Calu3 (cell line): ENCODE measurements at regions of chr2 and their contacts with region 1.

Region 1: DNA sequence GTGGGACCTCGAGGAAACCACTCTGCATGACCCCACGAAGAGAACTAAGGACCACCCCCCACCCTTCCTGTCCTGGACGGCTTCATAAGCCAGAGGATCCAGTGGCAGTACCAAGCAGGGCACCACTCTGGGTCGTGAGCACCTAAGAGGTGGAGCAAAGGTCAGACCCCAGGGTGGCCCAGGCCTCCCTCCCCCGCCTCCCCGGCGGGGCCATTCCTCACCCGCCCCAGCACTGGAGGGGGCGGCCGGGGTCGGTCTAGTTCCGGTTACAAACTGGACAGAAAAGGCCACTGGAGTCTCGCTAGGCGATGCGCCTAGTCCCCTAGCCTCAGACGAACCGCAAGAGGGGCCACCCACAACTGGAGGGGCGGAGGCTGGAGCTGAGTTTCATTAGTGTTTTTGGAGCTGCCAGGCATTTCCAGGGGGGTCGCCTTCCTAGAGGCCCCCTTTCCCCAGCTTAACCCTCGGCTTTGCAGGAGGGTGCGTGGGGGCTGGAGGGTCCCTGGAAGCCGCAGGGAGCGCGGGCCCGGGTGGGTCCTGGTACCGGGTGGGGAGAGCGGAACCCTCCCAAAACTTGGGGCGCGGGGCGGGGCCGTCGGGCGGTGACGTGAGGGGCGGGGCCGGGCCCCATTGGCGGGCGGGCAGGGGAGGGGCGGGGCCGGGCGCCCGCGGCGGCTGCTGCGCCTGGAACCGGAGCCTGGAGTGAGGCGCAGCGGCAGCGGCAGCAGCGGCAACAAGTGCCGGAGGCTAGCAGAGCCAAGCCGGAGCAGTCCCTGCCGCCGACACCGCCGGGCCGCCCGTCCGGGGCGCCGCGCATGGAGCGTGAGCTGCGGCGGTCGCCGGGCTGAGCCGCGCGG is at the start of gene B3GNT2:
- DNase-seq: peak; percentile 78
- H3K4me3 Mint-ChIP-seq: peak within 1 kb of the TSS; percentile 77
- H3K27ac Mint-ChIP-seq: peak within 1 kb of the TSS; percentile 73
- H3K4me1 Mint-ChIP-seq: peaks cover 26% of the 10 kb centered on the region
- H3K27me3 Mint-ChIP-seq: peaks cover 26% of the 10 kb centered on the region
- CTCF ChIP-seq: no peak
- total RNA-seq, gene B3GNT2: 23.8 and 27.0 TPM in 2 replicates

Region 2: GRCh38 chr2:61443342-61444041 is 752.2 kb before region 1 on chr2:
- CTCF ChIA-PET with region 1: no interaction called
- intact Hi-C with region 1: no loop called
- DNase-seq: peak; percentile 39
- H3K4me3 Mint-ChIP-seq: peak overlapping the region; percentile 37
- H3K27ac Mint-ChIP-seq: peak overlapping the region; percentile 62
- H3K4me1 Mint-ChIP-seq: peaks cover 48% of the 10 kb centered on the region
- H3K27me3 Mint-ChIP-seq: no peaks in the 10 kb centered on the region
- CTCF ChIP-seq: no peak

Region 3: DNA sequence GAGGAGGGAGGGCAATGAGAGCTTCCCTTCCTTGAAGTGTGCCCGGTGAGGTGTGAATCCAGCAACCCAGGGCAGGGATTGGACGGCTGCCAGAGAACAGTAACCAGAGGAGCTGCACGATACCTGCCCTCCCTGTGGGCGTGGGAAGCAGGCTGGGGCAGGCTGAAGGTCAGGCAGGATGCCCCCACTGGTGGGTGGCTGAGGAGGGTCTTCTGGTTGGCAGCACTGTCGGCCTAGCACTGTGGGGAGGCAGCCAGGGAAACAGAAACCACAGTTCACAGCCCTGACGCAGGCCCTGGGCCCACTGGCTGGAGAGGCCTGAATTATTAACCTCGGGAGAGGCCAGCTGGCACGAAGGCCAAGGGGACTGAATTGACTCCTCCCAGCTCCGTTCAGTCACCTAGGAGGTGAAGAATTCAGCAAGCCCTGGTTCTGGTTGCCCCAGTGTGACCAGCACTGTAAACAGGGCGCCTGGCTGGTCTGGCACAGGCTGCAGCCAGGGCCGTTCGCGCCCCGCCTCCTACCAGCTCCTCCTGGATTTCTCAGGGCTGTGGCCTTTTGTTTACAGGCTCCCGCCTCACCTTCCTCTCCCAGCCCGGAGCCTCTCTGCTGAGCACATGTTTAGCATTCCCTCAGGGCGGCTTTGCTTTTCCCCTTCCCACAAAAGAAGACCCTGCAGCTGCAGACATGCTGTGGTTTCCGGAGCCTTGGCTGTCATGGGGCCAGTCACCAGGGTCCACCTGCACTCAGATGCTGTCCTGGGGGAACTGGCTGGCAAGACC is 98.0 kb after region 1 on chr2:
- CTCF ChIA-PET with region 1: interaction called, 3 read pairs
- intact Hi-C with region 1: loop called (anchors 5 kb)
- DNase-seq: peak; percentile 84
- H3K4me3 Mint-ChIP-seq: peak overlapping the region; percentile 39
- H3K27ac Mint-ChIP-seq: peak overlapping the region; percentile 79
- H3K4me1 Mint-ChIP-seq: peaks cover 27% of the 10 kb centered on the region
- H3K27me3 Mint-ChIP-seq: no peaks in the 10 kb centered on the region
- CTCF ChIP-seq: no peak

Region 4: DNA sequence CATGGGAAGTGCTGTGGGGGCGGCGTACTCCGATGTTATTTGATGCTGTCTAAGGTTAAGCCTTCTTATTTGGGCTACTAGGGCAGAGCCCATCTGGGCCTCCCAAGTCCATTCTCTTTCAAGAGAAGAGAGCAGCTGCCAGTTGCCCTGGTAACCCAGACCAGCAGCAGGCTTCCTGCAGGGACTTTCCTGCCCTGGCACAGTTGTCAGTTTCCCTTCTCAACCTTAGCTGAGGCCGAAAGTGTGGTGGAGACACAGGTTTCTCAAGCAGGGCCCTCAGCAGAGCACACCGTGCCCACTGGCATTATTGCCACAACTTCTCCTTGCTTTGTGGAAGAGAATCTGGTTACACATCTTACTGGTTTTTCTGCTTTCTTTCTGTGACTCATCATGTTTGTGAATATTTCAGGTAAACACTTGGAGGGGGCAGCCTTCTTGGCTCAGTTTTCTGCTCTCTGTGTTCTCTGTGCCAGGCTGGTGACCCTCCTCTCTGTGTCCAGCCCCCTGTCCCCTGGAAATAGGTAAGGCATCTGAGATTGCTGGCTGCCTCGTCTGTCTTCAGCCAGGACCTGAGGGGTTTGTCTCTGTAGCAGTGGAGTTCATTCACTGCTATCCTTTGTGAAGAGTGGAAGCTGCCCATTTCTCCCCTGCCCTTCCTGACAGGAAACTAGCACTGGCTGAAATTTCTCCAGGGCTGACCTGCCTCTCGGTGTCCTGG is 111.3 kb after region 1 on chr2:
- CTCF ChIA-PET with region 1: interaction called, 3 read pairs
- intact Hi-C with region 1: loop called (anchors 5 kb)
- DNase-seq: peak; percentile 62
- H3K4me3 Mint-ChIP-seq: peak overlapping the region; percentile 41
- H3K27ac Mint-ChIP-seq: peak overlapping the region; percentile 93
- H3K4me1 Mint-ChIP-seq: peaks cover 55% of the 10 kb centered on the region
- H3K27me3 Mint-ChIP-seq: no peaks in the 10 kb centered on the region
- CTCF ChIP-seq: no peak

Region 5: GRCh38 chr2:62340994-62341484 is 145.4 kb after region 1 on chr2:
- CTCF ChIA-PET with region 1: no interaction called
- intact Hi-C with region 1: loop called (anchors 5 kb)
- DNase-seq: no peak
- H3K4me3 Mint-ChIP-seq: no peak overlapping the region
- H3K27ac Mint-ChIP-seq: no peak overlapping the region
- H3K4me1 Mint-ChIP-seq: peaks cover 24% of the 10 kb centered on the region
- H3K27me3 Mint-ChIP-seq: no peaks in the 10 kb centered on the region
- CTCF ChIP-seq: no peak